Esophagus muscularis mucosa (tissue), 4 donors: ENCODE measurements at regions of chr7 and their contacts with region 1.

Region 1: GRCh38 chr7:786472-787255 is 45.6 kb upstream of the SUN1 start:
- DNase-seq: no peak
- H3K4me3 ChIP-seq: no peak overlapping the region
- H3K27ac ChIP-seq: peak overlapping the region in 1 of 4 donors; percentile 62
- H3K4me1 ChIP-seq: peaks cover 11 to 32% (median 15%) of the 10 kb centered on the region in 4 donors
- H3K27me3 ChIP-seq: no peaks in the 10 kb centered on the region
- CTCF ChIP-seq: peak; percentile 93 to 98 (median 94)
- EP300 ChIP-seq: no peak
- POLR2A ChIP-seq: no peak

Region 2: DNA sequence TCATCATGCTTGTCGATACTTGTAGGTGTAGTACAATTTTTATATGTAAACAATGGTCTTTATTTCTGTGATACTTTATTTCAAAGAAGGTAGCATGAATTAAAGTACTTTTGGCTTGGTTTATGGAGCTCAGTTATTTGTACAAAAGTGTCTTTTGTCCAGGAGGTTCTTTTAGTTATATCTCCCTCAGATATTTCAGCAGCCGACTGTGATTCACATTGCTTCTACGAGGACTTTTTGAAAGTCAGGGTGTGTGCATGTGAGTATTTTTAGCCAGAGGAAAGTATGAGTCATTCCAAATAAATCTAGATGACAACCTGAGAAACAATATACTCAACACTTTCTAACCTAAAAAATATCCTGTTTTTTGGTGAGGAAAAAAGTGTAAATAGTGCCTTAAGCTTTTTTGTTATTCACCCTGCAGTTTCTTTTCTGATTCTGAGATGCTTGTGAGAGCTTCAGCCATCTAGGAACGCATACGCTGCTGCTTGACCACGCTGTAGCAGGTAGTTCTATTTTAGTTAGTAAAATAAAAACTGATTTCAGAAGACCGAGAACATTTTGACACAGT is 45.0 kb after region 1 on chr7:
- intact Hi-C with region 1: loop called (anchors 10 kb)
- DNase-seq: no peak
- H3K4me3 ChIP-seq: peak overlapping the region; percentile 19 to 51 (median 33)
- H3K27ac ChIP-seq: peak overlapping the region; percentile 90 to 95 (median 92)
- H3K4me1 ChIP-seq: peaks cover 92 to 97% (median 94%) of the 10 kb centered on the region in 4 donors
- H3K27me3 ChIP-seq: no peaks in the 10 kb centered on the region
- CTCF ChIP-seq: no peak
- EP300 ChIP-seq: no peak
- POLR2A ChIP-seq: no peak